HCT116 (cell line): ENCODE measurements at regions of chrX and their contacts with region 1.

Region 1: DNA sequence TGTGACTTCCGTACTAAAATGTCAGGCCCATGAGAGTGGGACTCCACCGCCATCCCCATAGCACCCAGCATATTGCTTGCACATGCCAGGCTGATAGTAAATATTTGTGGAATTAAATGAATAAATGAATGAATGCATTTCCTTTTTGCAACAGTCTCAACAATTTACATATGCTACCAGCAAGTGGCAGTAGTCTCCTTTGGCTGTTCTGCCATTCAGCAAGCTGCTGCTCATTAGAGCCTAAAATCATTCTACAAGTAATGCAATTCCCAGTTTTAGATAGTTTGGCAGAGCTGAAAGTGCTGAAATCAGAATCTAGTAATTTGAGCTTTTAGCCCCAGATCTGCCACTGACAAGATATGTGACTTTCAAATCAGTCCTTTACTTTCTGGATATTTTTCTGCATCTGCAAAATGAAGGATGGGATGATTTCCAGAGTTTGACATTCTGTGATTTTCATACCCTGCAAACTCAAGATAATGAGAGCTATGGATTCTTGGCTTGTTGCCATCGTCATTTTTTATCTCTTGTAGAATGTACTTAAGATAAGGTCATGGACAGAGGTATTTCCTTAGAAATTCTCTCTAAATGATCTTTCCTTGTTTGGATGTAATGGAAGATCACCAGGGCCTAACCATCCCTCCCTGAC is 35.7 kb upstream of the INTS6L start:
- DNase-seq: peak; percentile 21
- ATAC-seq: peak; percentile 57; the same call in 1 of the 2 replicates
- H3K4me3 ChIP-seq: no peak overlapping the region
- H3K27ac ChIP-seq: no peak overlapping the region
- H3K4me1 ChIP-seq: no peaks in the 10 kb centered on the region
- H3K27me3 ChIP-seq: no peaks in the 10 kb centered on the region
- CTCF ChIP-seq: peak; percentile 35 to 56 (median 52); a peak in 5 of 6 replicates
- POLR2A ChIP-seq: no peak
- RAD21 ChIP-seq: peak; percentile 70

Region 2: GRCh38 chrX:134948333-134949241 is 536.2 kb before region 1 on chrX:
- CTCF ChIA-PET with region 1: no interaction called
- POLR2A ChIA-PET with region 1: no interaction called
- RAD21 ChIA-PET with region 1: no interaction called
- intact Hi-C with region 1: no loop called
- DNase-seq: peak; percentile 50
- ATAC-seq: peak; percentile 72
- H3K4me3 ChIP-seq: peak overlapping the region in 1 of 2 experiments; percentile 20; a peak in 1 of 4 replicates
- H3K27ac ChIP-seq: peak overlapping the region; percentile 89
- H3K4me1 ChIP-seq: peaks cover 34 to 38% of the 10 kb centered on the region in 2 experiments
- H3K27me3 ChIP-seq: no peaks in the 10 kb centered on the region
- CTCF ChIP-seq: no peak
- POLR2A ChIP-seq: no peak
- RAD21 ChIP-seq: no peak

Region 3: GRCh38 chrX:135572436-135572835 is 87.7 kb after region 1 on chrX:
- CTCF ChIA-PET with region 1: interaction called, 3 read pairs
- POLR2A ChIA-PET with region 1: no interaction called
- RAD21 ChIA-PET with region 1: no interaction called
- intact Hi-C with region 1: loop called (anchors 2 kb)
- DNase-seq: no peak
- ATAC-seq: no peak
- H3K4me3 ChIP-seq: no peak overlapping the region
- H3K27ac ChIP-seq: no peak overlapping the region
- H3K4me1 ChIP-seq: no peaks in the 10 kb centered on the region
- H3K27me3 ChIP-seq: no peaks in the 10 kb centered on the region
- CTCF ChIP-seq: peak; percentile 20 to 42 (median 32); a peak in 3 of 6 replicates
- POLR2A ChIP-seq: no peak
- RAD21 ChIP-seq: peak; percentile 35

Region 4: DNA sequence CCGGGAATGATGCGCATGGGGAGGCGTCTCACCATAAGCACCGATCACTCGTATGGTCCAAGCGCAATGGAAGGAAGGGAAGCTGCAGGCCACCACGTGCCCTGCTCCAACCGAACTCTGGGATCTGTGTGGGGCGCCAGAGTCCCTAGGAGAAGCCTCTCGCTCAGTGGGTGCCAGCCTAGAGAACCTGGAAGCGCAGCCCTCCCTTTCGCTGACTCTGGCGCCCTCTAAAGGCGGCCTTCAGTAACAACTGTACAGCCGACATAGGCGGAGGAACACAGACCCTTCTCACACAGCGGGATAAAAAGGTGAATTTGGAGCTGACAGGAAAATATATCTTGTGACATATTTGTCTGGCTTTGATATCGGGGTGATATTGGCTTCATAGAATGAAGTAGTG is 111.7 kb after region 1 on chrX:
- CTCF ChIA-PET with region 1: no interaction called
- POLR2A ChIA-PET with region 1: no interaction called
- RAD21 ChIA-PET with region 1: no interaction called
- intact Hi-C with region 1: loop called (anchors 1 kb)
- DNase-seq: peak; percentile 38
- ATAC-seq: peak; percentile 95
- H3K4me3 ChIP-seq: no peak overlapping the region
- H3K27ac ChIP-seq: no peak overlapping the region
- H3K4me1 ChIP-seq: no peaks in the 10 kb centered on the region
- H3K27me3 ChIP-seq: no peaks in the 10 kb centered on the region
- CTCF ChIP-seq: peak; percentile 68 to 76 (median 70)
- POLR2A ChIP-seq: no peak
- RAD21 ChIP-seq: peak; percentile 73